Activated CD4-positive, alpha-beta memory T cell treated with anti-CD3 and anti-CD28 coated beads, Interleukin-2, amount 10 ng/mL, durations not matched to agents 7 days and 5 days (primary cell): ENCODE measurements at regions of chr2 and their contacts with region 1.

Region 1: DNA sequence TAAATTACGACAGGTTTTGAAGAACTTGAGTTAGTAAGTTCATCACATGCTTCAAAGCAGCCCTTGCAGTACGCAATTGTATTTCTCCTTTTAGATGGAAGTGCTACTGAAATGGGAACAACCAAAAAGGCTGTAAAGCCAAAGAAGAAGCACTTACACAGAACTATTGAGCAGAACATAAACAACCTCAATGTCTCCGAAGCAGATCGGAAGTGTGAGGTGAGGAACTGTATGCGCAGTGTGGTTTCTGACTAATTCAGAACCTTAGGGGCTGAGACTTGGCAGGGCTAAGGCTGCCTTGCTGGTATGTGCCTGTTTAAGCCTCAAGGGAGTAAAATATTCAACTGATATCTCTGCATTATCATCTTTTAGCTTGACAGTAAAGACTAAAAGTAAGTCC is 8.4 kb downstream of the NCAPH start:
- DNase-seq: peak; percentile 80
- H3K4me3 Mint-ChIP-seq: peak overlapping the region; percentile 36
- H3K27ac Mint-ChIP-seq: peak overlapping the region; percentile 92
- H3K4me1 Mint-ChIP-seq: peaks cover 75% of the 10 kb centered on the region
- H3K27me3 Mint-ChIP-seq: no peaks in the 10 kb centered on the region

Region 2: GRCh38 chr2:96251721-96252292 is 92.2 kb before region 1 on chr2:
- CTCF ChIA-PET with region 1: no interaction called
- POLR2A ChIA-PET with region 1: no interaction called
- DNase-seq: no peak
- H3K4me3 Mint-ChIP-seq: no peak overlapping the region
- H3K27ac Mint-ChIP-seq: peak overlapping the region; percentile 23
- H3K4me1 Mint-ChIP-seq: peaks cover 40% of the 10 kb centered on the region
- H3K27me3 Mint-ChIP-seq: no peaks in the 10 kb centered on the region

Region 3: DNA sequence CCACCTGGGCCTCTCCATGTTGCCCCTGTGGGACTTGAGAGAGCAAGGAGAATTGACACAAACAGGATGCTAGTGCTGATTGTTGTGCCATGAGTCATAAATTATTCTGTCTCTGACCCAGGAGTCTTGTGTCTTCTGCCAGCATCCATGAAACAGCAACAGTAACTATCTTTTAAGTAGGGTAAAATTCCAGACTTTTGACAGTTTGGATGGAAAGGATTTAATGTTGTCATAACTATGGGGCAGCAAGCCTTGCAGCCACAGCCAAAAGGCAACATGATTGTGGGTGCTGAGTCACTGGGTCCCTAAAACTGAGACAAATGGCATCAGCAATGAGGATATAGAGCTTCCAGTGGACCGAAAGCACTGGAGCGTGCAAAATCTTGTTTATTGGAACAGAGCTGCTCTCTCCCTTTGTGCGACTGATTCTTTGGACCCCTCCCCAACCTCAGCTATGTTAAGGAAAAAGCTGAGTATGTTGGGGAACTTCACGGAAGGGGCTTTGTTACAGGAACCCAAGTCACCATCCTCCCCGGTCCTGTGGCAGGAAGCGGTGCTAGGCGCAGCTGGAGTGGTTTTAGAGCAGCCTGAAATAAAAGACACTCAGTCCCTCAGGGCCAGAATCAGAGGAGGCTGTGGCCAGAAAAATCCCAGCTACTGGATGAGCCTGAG is 28.5 kb before region 1 on chr2:
- CTCF ChIA-PET with region 1: interaction called, 6 read pairs
- POLR2A ChIA-PET with region 1: interaction called, 422 read pairs
- DNase-seq: peak; percentile 61
- H3K4me3 Mint-ChIP-seq: peak overlapping the region; percentile 61
- H3K27ac Mint-ChIP-seq: peak overlapping the region; percentile 93
- H3K4me1 Mint-ChIP-seq: peaks cover 63% of the 10 kb centered on the region
- H3K27me3 Mint-ChIP-seq: no peaks in the 10 kb centered on the region

Region 4: GRCh38 chr2:96320728-96321622 is 23.0 kb before region 1 on chr2:
- CTCF ChIA-PET with region 1: interaction called, 6 read pairs
- POLR2A ChIA-PET with region 1: interaction called, 422 read pairs
- DNase-seq: peak; percentile 46
- H3K4me3 Mint-ChIP-seq: peak overlapping the region; percentile 80
- H3K27ac Mint-ChIP-seq: peak overlapping the region; percentile 84
- H3K4me1 Mint-ChIP-seq: peaks cover 70% of the 10 kb centered on the region
- H3K27me3 Mint-ChIP-seq: no peaks in the 10 kb centered on the region